ENCODE measurements at regions of chr1 and their contacts with region 1.

Region 1: DNA sequence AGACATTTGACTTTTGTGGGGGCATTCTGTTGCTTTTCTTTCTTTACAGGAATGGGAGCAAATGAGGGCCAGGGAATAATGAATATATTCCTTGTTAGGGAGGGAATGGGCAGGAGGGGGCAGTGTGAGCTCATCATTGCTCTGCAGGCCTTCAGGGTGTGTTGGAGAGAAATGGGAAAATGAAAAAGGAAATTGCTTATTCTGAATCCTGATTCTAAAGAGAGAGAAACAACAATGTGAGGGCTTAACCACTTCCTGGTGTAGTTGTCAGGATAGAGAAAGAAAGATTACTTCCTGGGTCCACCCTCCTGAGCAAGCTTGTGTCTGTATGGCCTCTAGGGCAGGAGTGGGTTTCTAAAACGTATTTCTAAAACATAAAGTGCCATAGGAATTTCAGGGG is 28.3 kb downstream of the VANGL2 start:
- DNase-seq: peak; percentile 70
- H3K4me3 Mint-ChIP-seq: no peak overlapping the region
- H3K27ac Mint-ChIP-seq: no peak overlapping the region
- H3K4me1 Mint-ChIP-seq: no peaks in the 10 kb centered on the region
- H3K27me3 Mint-ChIP-seq: peaks cover 8% of the 10 kb centered on the region
- CTCF ChIP-seq: peak; percentile 93

Region 2: GRCh38 chr1:160098852-160099561 is 329.6 kb before region 1 on chr1:
- CTCF ChIA-PET with region 1: no interaction called
- POLR2A ChIA-PET with region 1: no interaction called
- intact Hi-C with region 1: no loop called
- DNase-seq: peak; percentile 96
- H3K4me3 Mint-ChIP-seq: peak overlapping the region; percentile 81
- H3K27ac Mint-ChIP-seq: no peak overlapping the region
- H3K4me1 Mint-ChIP-seq: peaks cover 36% of the 10 kb centered on the region
- H3K27me3 Mint-ChIP-seq: no peaks in the 10 kb centered on the region
- CTCF ChIP-seq: no peak

Region 3: DNA sequence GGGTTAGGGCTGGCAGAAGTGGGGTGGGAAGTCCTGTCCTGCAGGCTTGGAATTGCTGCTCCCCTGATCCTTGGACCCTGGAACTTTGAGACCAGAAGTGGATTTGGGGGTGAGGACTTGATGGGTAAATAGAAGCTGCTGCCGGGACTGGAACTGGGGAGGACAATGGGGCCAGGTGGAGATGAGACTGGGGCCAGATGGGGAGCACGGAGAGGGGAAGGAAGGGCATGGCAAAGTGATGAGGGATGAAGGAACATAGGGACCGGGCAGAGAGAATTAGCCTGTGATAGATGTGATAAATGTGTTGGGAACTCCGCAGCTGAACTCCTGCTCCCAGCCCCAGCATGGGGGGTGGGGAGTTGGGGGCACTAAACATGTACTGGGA is 61.1 kb before region 1 on chr1:
- CTCF ChIA-PET with region 1: no interaction called
- POLR2A ChIA-PET with region 1: no interaction called
- intact Hi-C with region 1: no loop called
- DNase-seq: no peak
- H3K4me3 Mint-ChIP-seq: no peak overlapping the region
- H3K27ac Mint-ChIP-seq: peak overlapping the region; percentile 14
- H3K4me1 Mint-ChIP-seq: peaks cover 5% of the 10 kb centered on the region
- H3K27me3 Mint-ChIP-seq: peaks cover 39% of the 10 kb centered on the region
- CTCF ChIP-seq: no peak

Region 4: GRCh38 chr1:160451119-160451858 is 22.6 kb after region 1 on chr1:
- CTCF ChIA-PET with region 1: interaction called, 13 read pairs
- POLR2A ChIA-PET with region 1: no interaction called
- intact Hi-C with region 1: no loop called
- DNase-seq: no peak
- H3K4me3 Mint-ChIP-seq: no peak overlapping the region
- H3K27ac Mint-ChIP-seq: no peak overlapping the region
- H3K4me1 Mint-ChIP-seq: no peaks in the 10 kb centered on the region
- H3K27me3 Mint-ChIP-seq: peaks cover 28% of the 10 kb centered on the region
- CTCF ChIP-seq: no peak

Region 5: DNA sequence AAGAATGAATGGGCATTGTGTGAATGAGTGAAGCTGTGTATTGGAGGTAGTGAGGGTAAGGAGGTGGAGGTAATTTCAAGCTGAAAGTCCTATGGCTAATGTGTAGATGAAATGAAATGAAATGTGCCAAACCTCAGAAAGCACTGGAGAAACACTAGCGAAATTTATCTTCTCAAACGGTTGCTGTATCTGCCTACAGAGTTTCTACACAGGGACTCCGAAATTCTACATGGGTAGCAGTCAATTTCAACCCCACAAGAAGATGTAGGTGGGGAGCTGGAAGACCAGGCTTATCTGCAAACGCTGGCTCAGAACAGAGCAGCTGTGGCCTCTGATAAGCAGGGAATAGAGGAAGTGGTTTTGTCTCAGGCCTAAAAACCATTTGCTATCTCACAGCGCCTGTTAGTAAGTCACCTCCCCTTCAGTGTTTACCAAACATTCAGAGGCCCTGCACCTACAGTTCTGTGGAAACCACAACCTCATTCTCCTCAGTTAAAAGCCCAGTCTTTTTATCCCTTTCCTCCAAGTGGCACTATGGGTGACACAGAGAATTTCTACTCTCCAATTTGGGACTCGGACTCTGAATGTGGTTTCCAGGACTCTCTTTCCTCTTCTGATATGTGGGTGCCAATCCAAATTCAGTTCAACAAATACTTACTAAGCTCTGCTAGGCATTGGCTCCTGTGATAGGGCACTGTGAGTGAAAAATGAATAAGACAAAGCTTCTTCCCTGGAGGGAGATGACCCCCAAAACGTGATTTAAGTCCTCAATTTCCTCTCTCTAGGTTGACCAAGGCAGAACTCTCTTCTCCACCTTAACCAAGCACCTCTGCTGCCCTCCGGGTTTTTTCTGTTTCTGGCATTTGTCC is 111.6 kb after region 1 on chr1:
- CTCF ChIA-PET with region 1: interaction called, 5 read pairs
- POLR2A ChIA-PET with region 1: no interaction called
- intact Hi-C with region 1: loop called (anchors 1 kb)
- DNase-seq: no peak
- H3K4me3 Mint-ChIP-seq: no peak overlapping the region
- H3K27ac Mint-ChIP-seq: no peak overlapping the region
- H3K4me1 Mint-ChIP-seq: peaks cover 7% of the 10 kb centered on the region
- H3K27me3 Mint-ChIP-seq: no peaks in the 10 kb centered on the region
- CTCF ChIP-seq: no peak

Measured in MCF 10A (cell line).